ENCODE measurements at regions of chr15 and their contacts with region 1.

Region 1: GRCh38 chr15:25508369-25509002 is 69.7 kb upstream of the UBE3A start:
- DNase-seq: no peak
- ATAC-seq: peak; percentile 36; the same call in 1 of the 2 replicates
- H3K4me3 Mint-ChIP-seq: no peak overlapping the region
- H3K27ac Mint-ChIP-seq: no peak overlapping the region
- H3K4me1 Mint-ChIP-seq: peaks cover 51% of the 10 kb centered on the region
- H3K27me3 Mint-ChIP-seq: no peaks in the 10 kb centered on the region; the same call in 1 of the 2 replicates
- CTCF ChIP-seq: peak; percentile 36; the same call in 1 of the 2 replicates

Region 2: GRCh38 chr15:25611603-25612002 is 103.1 kb after region 1 on chr15:
- CTCF ChIA-PET with region 1: interaction called, 13 read pairs
- POLR2A ChIA-PET with region 1: no interaction called
- DNase-seq: no peak
- ATAC-seq: no peak
- H3K4me3 Mint-ChIP-seq: no peak overlapping the region
- H3K27ac Mint-ChIP-seq: no peak overlapping the region
- H3K4me1 Mint-ChIP-seq: 0 out of 2 replicates have a peak, but pooled peaks cover 2% of the 10 kb centered on the region
- H3K27me3 Mint-ChIP-seq: peaks cover 3% of the 10 kb centered on the region; the same call in 1 of the 2 replicates
- CTCF ChIP-seq: no peak

Region 3: GRCh38 chr15:25684521-25685431 is 176.3 kb after region 1 on chr15:
- CTCF ChIA-PET with region 1: interaction called, 110 read pairs
- POLR2A ChIA-PET with region 1: no interaction called
- DNase-seq: no peak
- ATAC-seq: no peak
- H3K4me3 Mint-ChIP-seq: no peak overlapping the region
- H3K27ac Mint-ChIP-seq: no peak overlapping the region
- H3K4me1 Mint-ChIP-seq: peaks cover 19% of the 10 kb centered on the region
- H3K27me3 Mint-ChIP-seq: peaks cover 6% of the 10 kb centered on the region
- CTCF ChIP-seq: no peak

Region 4: GRCh38 chr15:25710184-25710583 is 201.7 kb after region 1 on chr15:
- CTCF ChIA-PET with region 1: interaction called, 36 read pairs
- POLR2A ChIA-PET with region 1: no interaction called
- DNase-seq: peak; percentile 81
- ATAC-seq: peak; percentile 93
- H3K4me3 Mint-ChIP-seq: no peak overlapping the region
- H3K27ac Mint-ChIP-seq: no peak overlapping the region
- H3K4me1 Mint-ChIP-seq: peaks cover 6% of the 10 kb centered on the region; the same call in 1 of the 2 replicates
- H3K27me3 Mint-ChIP-seq: no peaks in the 10 kb centered on the region
- CTCF ChIP-seq: peak; percentile 52; the same call in 1 of the 2 replicates

Measured in WTC11 (cell line).